ENCODE measurements at regions of chr2 and their contacts with region 1.

Region 1: DNA sequence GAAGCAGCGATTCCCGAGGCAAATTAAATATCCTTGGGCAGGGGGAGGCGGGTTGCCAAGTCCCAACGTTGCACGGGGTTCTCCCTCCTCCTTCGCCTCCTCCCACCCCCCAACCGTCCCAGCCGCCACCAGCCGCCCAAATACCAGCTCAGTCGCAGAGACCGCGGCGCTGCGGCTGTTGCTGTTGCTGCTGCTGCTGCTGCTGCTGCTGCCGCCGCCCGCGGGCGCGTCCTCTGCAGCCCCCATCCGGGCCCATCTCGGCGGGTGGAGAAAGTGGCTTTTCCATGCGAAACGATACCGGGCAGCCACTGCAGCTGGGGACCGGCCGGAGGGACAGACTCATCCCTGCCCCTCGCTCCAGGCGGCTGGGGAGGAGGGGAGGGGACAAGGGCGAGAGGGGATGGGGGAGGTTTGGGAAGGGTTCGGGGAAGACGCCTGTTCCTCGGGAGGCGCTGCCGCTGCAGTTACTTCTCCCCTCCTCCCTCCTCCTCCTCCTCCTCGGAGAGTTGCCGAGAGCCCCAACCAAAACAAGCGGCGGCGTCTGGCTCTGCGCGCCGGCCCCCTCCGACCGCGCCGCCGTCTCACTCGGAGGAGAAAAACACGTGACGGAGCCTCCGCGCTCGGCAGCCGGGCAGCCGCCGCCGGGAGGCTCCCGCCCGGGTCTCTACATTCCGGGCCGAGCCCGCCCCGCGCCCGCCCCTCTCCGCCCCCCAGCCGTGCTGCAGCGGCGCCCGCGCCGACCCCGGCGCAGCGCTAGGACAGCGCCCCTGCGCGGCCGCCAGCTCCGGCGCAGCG is at the start of gene IRS1:
- DNase-seq: peak; percentile 55
- H3K4me3 Mint-ChIP-seq: peak within 1 kb of the TSS; percentile 73
- H3K27ac Mint-ChIP-seq: no peak within 1 kb of the TSS
- H3K4me1 Mint-ChIP-seq: peaks cover 24% of the 10 kb centered on the region
- H3K27me3 Mint-ChIP-seq: no peaks in the 10 kb centered on the region
- CTCF ChIP-seq: peak; percentile 35
- total RNA-seq, gene IRS1: 6.1 and 10.5 TPM in 2 replicates

Region 2: GRCh38 chr2:225668606-225669266 is 1130.6 kb before region 1 on chr2:
- CTCF ChIA-PET with region 1: interaction called, 20 read pairs
- POLR2A ChIA-PET with region 1: interaction called, 14 read pairs
- intact Hi-C with region 1: loop called (anchors 1 kb)
- DNase-seq: peak; percentile 77
- H3K4me3 Mint-ChIP-seq: no peak overlapping the region
- H3K27ac Mint-ChIP-seq: no peak overlapping the region
- H3K4me1 Mint-ChIP-seq: peaks cover 5% of the 10 kb centered on the region
- H3K27me3 Mint-ChIP-seq: no peaks in the 10 kb centered on the region
- CTCF ChIP-seq: peak; percentile 74

Region 3: DNA sequence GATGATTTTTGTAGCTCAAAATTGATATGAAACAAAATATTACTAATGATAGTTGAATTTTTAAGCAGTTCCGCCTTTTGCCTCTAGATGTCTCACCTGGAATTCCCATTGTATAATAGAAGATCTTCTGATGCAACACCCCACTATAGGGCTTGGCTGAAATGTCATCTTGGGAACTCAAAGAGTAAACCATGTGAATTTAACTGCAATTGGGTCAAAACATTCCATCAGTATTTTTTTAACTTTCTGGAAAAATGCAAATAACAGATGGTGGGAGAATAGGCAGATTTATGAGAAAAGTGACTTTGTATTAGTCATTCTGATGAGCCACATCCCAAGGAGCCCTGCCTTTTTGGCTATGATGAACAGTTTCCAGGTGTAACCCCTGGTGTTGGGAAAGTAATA is 909.9 kb before region 1 on chr2:
- CTCF ChIA-PET with region 1: interaction called, 43 read pairs
- POLR2A ChIA-PET with region 1: interaction called, 10 read pairs
- intact Hi-C with region 1: loop called (anchors 1 kb)
- DNase-seq: peak; percentile 70
- H3K4me3 Mint-ChIP-seq: no peak overlapping the region
- H3K27ac Mint-ChIP-seq: no peak overlapping the region
- H3K4me1 Mint-ChIP-seq: peaks cover 2% of the 10 kb centered on the region
- H3K27me3 Mint-ChIP-seq: no peaks in the 10 kb centered on the region
- CTCF ChIP-seq: peak; percentile 77

Region 4: GRCh38 chr2:225911019-225911418 is 888.4 kb before region 1 on chr2:
- CTCF ChIA-PET with region 1: no interaction called
- POLR2A ChIA-PET with region 1: no interaction called
- intact Hi-C with region 1: no loop called
- DNase-seq: no peak
- H3K4me3 Mint-ChIP-seq: no peak overlapping the region
- H3K27ac Mint-ChIP-seq: no peak overlapping the region
- H3K4me1 Mint-ChIP-seq: no peaks in the 10 kb centered on the region
- H3K27me3 Mint-ChIP-seq: no peaks in the 10 kb centered on the region
- CTCF ChIP-seq: no peak

Region 5: GRCh38 chr2:226215902-226216503 is 583.4 kb before region 1 on chr2:
- CTCF ChIA-PET with region 1: interaction called, 11 read pairs
- POLR2A ChIA-PET with region 1: interaction called, 5 read pairs
- intact Hi-C with region 1: loop called (anchors 2 kb)
- DNase-seq: peak; percentile 75
- H3K4me3 Mint-ChIP-seq: no peak overlapping the region
- H3K27ac Mint-ChIP-seq: no peak overlapping the region
- H3K4me1 Mint-ChIP-seq: peaks cover 35% of the 10 kb centered on the region
- H3K27me3 Mint-ChIP-seq: no peaks in the 10 kb centered on the region
- CTCF ChIP-seq: no peak

Region 6: GRCh38 chr2:226673314-226673723 is 126.1 kb before region 1 on chr2:
- CTCF ChIA-PET with region 1: no interaction called
- POLR2A ChIA-PET with region 1: no interaction called
- intact Hi-C with region 1: no loop called
- DNase-seq: peak; percentile 78
- H3K4me3 Mint-ChIP-seq: no peak overlapping the region
- H3K27ac Mint-ChIP-seq: peak overlapping the region; percentile 8
- H3K4me1 Mint-ChIP-seq: peaks cover 15% of the 10 kb centered on the region
- H3K27me3 Mint-ChIP-seq: no peaks in the 10 kb centered on the region
- CTCF ChIP-seq: no peak

Region 7: GRCh38 chr2:226756129-226756528 is 43.2 kb before region 1 on chr2:
- CTCF ChIA-PET with region 1: interaction called, 10 read pairs
- POLR2A ChIA-PET with region 1: interaction called, 114 read pairs
- intact Hi-C with region 1: no loop called
- DNase-seq: peak; percentile 93
- H3K4me3 Mint-ChIP-seq: no peak overlapping the region
- H3K27ac Mint-ChIP-seq: peak overlapping the region; percentile 97
- H3K4me1 Mint-ChIP-seq: peaks cover 15% of the 10 kb centered on the region
- H3K27me3 Mint-ChIP-seq: no peaks in the 10 kb centered on the region
- CTCF ChIP-seq: no peak

Region 8: GRCh38 chr2:226984750-226985582 is 185.6 kb after region 1 on chr2:
- CTCF ChIA-PET with region 1: interaction called, 4 read pairs
- POLR2A ChIA-PET with region 1: interaction called, 3 read pairs
- intact Hi-C with region 1: loop called (anchors 2 kb)
- DNase-seq: peak; percentile 61
- H3K4me3 Mint-ChIP-seq: no peak overlapping the region
- H3K27ac Mint-ChIP-seq: no peak overlapping the region
- H3K4me1 Mint-ChIP-seq: peaks cover 15% of the 10 kb centered on the region
- H3K27me3 Mint-ChIP-seq: no peaks in the 10 kb centered on the region
- CTCF ChIP-seq: peak; percentile 61

Region 9: GRCh38 chr2:227106845-227107759 is 307.7 kb after region 1 on chr2:
- CTCF ChIA-PET with region 1: interaction called, 3 read pairs
- POLR2A ChIA-PET with region 1: no interaction called
- intact Hi-C with region 1: loop called (anchors 1 kb)
- DNase-seq: peak; percentile 81
- H3K4me3 Mint-ChIP-seq: no peak overlapping the region
- H3K27ac Mint-ChIP-seq: no peak overlapping the region
- H3K4me1 Mint-ChIP-seq: peaks cover 4% of the 10 kb centered on the region
- H3K27me3 Mint-ChIP-seq: no peaks in the 10 kb centered on the region
- CTCF ChIP-seq: peak; percentile 85